Activated CD8-positive, alpha-beta T cell treated with anti-CD3 and anti-CD28 coated beads for 36 hours (primary cell): ENCODE measurements at regions of chr10 and their contacts with region 1.

Region 1: DNA sequence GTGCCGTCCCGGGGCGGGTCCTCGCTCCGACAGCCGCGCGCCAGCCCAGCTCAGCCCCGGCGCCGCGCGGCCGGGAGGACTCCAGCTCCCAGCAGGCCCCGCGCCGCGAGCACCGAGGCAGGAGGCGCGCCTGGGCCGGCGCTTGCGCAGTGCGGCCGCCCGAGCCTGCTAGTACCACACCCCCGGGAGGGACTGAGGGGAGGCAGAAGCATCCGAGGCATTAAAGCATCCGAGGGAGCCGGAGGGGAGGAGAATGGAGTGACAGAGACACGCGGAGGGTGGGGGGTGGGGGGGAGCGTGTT is at the start of gene GRK5:
- DNase-seq: peak; percentile 95
- ATAC-seq: peak; percentile 90
- H3K4me3 Mint-ChIP-seq: peak within 1 kb of the TSS; percentile 88
- H3K27ac Mint-ChIP-seq: peak within 1 kb of the TSS; percentile 96
- H3K4me1 Mint-ChIP-seq: peaks cover 35% of the 10 kb centered on the region
- H3K27me3 Mint-ChIP-seq: no peaks in the 10 kb centered on the region
- CTCF ChIP-seq: no peak
- total RNA-seq, gene GRK5: 14.8 to 15.6 TPM

Region 2: GRCh38 chr10:118734475-118734874 is 472.8 kb before region 1 on chr10:
- CTCF ChIA-PET with region 1: no interaction called
- POLR2A ChIA-PET with region 1: no interaction called
- intact Hi-C with region 1: no loop called
- DNase-seq: no peak
- ATAC-seq: no peak
- H3K4me3 Mint-ChIP-seq: no peak overlapping the region
- H3K27ac Mint-ChIP-seq: no peak overlapping the region
- H3K4me1 Mint-ChIP-seq: peaks cover 88% of the 10 kb centered on the region
- H3K27me3 Mint-ChIP-seq: no peaks in the 10 kb centered on the region
- CTCF ChIP-seq: no peak

Region 3: GRCh38 chr10:119131512-119132240 is 75.6 kb before region 1 on chr10:
- CTCF ChIA-PET with region 1: interaction called, 3 read pairs
- POLR2A ChIA-PET with region 1: interaction called, 11 read pairs
- intact Hi-C with region 1: no loop called
- DNase-seq: peak; percentile 80
- ATAC-seq: peak; percentile 90
- H3K4me3 Mint-ChIP-seq: peak overlapping the region; percentile 80
- H3K27ac Mint-ChIP-seq: peak overlapping the region; percentile 99
- H3K4me1 Mint-ChIP-seq: peaks cover 40% of the 10 kb centered on the region
- H3K27me3 Mint-ChIP-seq: no peaks in the 10 kb centered on the region
- CTCF ChIP-seq: no peak

Region 4: GRCh38 chr10:119217991-119218490 is 10.7 kb after region 1 on chr10:
- CTCF ChIA-PET with region 1: interaction called, 31 read pairs
- POLR2A ChIA-PET with region 1: interaction called, 7 read pairs
- intact Hi-C with region 1: no loop called
- DNase-seq: no peak
- ATAC-seq: no peak
- H3K4me3 Mint-ChIP-seq: no peak overlapping the region
- H3K27ac Mint-ChIP-seq: no peak overlapping the region
- H3K4me1 Mint-ChIP-seq: peaks cover 34% of the 10 kb centered on the region
- H3K27me3 Mint-ChIP-seq: no peaks in the 10 kb centered on the region
- CTCF ChIP-seq: no peak

Region 5: DNA sequence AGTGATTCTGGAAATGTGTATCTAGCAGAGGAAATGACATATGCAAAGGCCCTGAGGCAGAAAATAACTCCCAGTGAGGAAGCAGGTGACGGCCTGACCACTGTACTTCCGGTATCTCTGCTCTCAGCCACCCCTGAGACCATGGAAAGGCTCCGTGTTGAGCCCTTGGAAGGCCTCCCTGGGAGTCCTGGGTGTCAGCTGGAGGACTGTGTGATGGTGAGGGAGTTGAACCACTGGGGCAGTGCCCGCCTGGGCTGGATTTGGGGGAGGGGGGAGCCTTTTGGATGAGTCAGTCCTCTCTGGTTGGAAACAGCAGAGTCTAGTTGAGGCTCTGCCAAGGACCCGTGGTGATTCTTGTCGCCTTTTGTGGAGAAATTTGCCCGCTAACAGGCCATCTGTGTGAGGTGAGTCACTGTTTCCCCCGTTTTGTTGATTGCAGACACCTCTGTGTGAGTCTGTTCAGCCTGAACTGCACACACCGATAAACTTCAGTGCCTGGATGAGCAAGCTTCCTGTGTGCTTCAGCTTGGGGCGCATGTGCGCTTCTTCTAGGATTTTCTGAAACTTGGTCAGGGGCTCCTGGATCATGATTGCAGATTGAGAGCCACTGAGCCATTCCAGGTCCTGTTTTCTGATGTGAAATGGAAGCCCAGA is 98.7 kb after region 1 on chr10:
- CTCF ChIA-PET with region 1: interaction called, 21 read pairs
- POLR2A ChIA-PET with region 1: interaction called, 27 read pairs
- intact Hi-C with region 1: loop called (anchors 2 kb)
- DNase-seq: peak; percentile 96
- ATAC-seq: peak; percentile 75
- H3K4me3 Mint-ChIP-seq: peak overlapping the region; percentile 67
- H3K27ac Mint-ChIP-seq: peak overlapping the region; percentile 100
- H3K4me1 Mint-ChIP-seq: peaks cover 81% of the 10 kb centered on the region
- H3K27me3 Mint-ChIP-seq: peaks cover 2% of the 10 kb centered on the region
- CTCF ChIP-seq: no peak

Region 6: GRCh38 chr10:119416855-119417254 is 209.5 kb after region 1 on chr10:
- CTCF ChIA-PET with region 1: interaction called, 49 read pairs
- POLR2A ChIA-PET with region 1: interaction called, 7 read pairs
- intact Hi-C with region 1: no loop called
- DNase-seq: peak; percentile 85
- ATAC-seq: peak; percentile 89
- H3K4me3 Mint-ChIP-seq: no peak overlapping the region
- H3K27ac Mint-ChIP-seq: no peak overlapping the region
- H3K4me1 Mint-ChIP-seq: no peaks in the 10 kb centered on the region
- H3K27me3 Mint-ChIP-seq: no peaks in the 10 kb centered on the region
- CTCF ChIP-seq: peak; percentile 82

Region 7: GRCh38 chr10:119596537-119597404 is 389.5 kb after region 1 on chr10 and contains the start of gene TIAL1:
- CTCF ChIA-PET with region 1: no interaction called
- POLR2A ChIA-PET with region 1: no interaction called
- intact Hi-C with region 1: loop called (anchors 5 kb)
- DNase-seq: peak; percentile 98
- ATAC-seq: peak; percentile 89
- H3K4me3 Mint-ChIP-seq: peak within 1 kb of the TSS; percentile 99
- H3K27ac Mint-ChIP-seq: peak within 1 kb of the TSS; percentile 98
- H3K4me1 Mint-ChIP-seq: peaks cover 48% of the 10 kb centered on the region
- H3K27me3 Mint-ChIP-seq: no peaks in the 10 kb centered on the region
- CTCF ChIP-seq: no peak
- total RNA-seq, gene TIAL1: 200 to 204 TPM